ENCODE measurements at regions of chr18 and their contacts with region 1.

Region 1: DNA sequence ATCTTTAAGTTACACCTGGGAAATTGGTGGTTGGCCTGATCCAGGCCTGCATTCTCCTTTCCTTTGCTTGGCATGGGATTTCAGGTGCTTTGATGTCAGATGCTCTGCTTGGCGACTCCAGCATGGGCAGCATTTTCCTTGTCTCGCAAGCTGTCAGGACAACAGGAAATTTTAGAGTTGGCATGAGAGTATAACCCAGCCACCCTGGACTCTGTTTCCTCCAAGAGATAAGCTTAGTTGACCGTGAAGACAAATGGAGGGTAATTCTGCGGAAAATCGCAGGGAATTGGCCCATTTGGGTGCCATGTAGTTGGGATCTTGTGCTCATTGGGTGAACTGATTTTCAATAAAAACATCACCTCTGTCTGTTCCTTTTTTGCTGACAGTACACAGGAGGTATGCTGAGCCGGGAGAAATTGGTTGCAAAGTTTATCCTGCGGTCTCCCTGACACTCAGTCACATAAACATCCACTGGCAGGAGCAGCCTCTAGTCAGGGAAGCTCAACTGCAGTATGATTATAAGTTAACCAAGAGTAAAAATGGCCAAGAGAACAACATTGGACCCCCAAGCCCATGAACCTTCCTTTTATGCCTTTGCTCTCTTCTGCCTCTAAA is 409.9 kb downstream of the SETBP1 start:
- DNase-seq: no peak
- ATAC-seq: no peak
- H3K4me3 ChIP-seq: no peak overlapping the region
- H3K4me3 Mint-ChIP-seq: no peak overlapping the region
- H3K27ac ChIP-seq: no peak overlapping the region
- H3K27ac Mint-ChIP-seq: no peak overlapping the region
- H3K4me1 ChIP-seq: no peaks in the 10 kb centered on the region
- H3K4me1 Mint-ChIP-seq: no peaks in the 10 kb centered on the region
- H3K27me3 ChIP-seq: peaks cover 0 to 3% of the 10 kb centered on the region in 2 experiments
- H3K27me3 Mint-ChIP-seq: peaks cover 0 to 5% of the 10 kb centered on the region in 2 donors

Region 2: GRCh38 chr18:44927127-44927849 is 163.3 kb before region 1 on chr18:
- CTCF ChIA-PET with region 1: no interaction called
- POLR2A ChIA-PET with region 1: no interaction called
- DNase-seq: no peak
- ATAC-seq: no peak
- H3K4me3 ChIP-seq: no peak overlapping the region
- H3K4me3 Mint-ChIP-seq: no peak overlapping the region
- H3K27ac ChIP-seq: no peak overlapping the region
- H3K27ac Mint-ChIP-seq: no peak overlapping the region
- H3K4me1 ChIP-seq: no peaks in the 10 kb centered on the region
- H3K4me1 Mint-ChIP-seq: no peaks in the 10 kb centered on the region
- H3K27me3 ChIP-seq: no peaks in the 10 kb centered on the region
- H3K27me3 Mint-ChIP-seq: peaks cover 0 to 7% of the 10 kb centered on the region in 2 donors

Region 3: DNA sequence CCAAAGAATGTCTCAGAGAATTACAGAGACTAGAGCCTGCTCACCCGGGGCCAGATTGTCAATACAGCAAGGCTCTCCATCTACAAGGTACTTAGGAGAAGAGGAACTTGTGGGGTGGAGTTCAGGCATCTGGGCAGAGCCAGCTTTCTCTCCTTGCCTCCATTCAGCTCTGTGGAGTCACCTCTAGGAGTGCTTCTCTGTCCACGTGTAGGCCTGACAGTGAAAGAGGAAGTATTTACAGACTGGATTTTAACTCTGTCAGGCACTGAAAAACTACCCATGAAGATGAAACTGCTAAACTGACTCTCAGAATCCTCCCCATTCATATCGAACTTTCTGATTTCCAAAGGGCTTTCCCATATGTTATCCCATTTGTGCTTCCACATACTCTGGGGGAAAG is 94.4 kb before region 1 on chr18:
- CTCF ChIA-PET with region 1: no interaction called
- POLR2A ChIA-PET with region 1: interaction called in 1 of 2 experiments, 11 read pairs
- DNase-seq: no peak
- ATAC-seq: no peak
- H3K4me3 ChIP-seq: no peak overlapping the region
- H3K4me3 Mint-ChIP-seq: no peak overlapping the region
- H3K27ac ChIP-seq: no peak overlapping the region
- H3K27ac Mint-ChIP-seq: no peak overlapping the region
- H3K4me1 ChIP-seq: no peaks in the 10 kb centered on the region
- H3K4me1 Mint-ChIP-seq: no peaks in the 10 kb centered on the region
- H3K27me3 ChIP-seq: no peaks in the 10 kb centered on the region
- H3K27me3 Mint-ChIP-seq: no peaks in the 10 kb centered on the region

Region 4: DNA sequence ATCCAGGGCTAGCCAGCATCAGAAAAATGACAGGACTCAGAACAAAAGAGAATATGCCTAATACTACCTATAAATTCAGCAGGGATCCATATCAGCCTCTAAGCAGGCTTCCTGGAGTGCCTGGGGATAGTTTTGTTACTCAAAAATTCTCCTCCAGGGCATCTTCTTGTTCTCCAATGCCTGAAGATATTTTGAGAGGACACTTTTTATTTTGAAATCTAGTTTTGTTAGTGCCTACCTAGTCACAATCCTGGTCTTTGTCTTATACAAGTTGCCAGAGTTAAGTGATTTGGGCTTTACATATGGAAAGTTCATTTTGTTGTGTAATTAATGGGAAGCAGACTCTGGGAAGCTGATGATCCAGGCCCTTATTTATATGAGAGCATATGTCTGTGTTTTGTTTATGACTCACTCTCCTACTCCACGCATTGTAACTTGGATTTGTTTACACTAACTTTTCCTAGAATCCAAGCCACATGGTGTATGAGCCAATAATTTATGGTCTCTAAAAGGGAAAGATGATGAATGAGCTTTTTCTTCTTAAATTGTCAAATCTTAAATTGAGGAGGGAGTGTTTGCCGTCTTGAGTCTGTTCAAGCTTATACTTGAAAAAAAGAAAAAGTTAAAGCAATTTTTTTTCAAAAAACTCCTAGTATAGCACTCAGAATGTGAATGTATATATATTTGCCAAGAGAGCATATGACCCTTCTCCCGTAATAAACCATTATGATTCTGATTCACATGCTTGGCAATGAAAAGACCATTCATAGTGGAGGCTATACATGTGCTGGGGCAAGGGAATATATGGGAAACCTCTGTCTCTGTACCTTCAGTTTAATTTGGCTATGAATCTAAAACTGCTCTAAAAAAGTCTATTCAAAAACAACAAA is 39.7 kb before region 1 on chr18:
- CTCF ChIA-PET with region 1: no interaction called
- POLR2A ChIA-PET with region 1: no interaction called
- DNase-seq: no peak
- ATAC-seq: no peak
- H3K4me3 ChIP-seq: no peak overlapping the region
- H3K4me3 Mint-ChIP-seq: no peak overlapping the region
- H3K27ac ChIP-seq: no peak overlapping the region
- H3K27ac Mint-ChIP-seq: no peak overlapping the region
- H3K4me1 ChIP-seq: no peaks in the 10 kb centered on the region
- H3K4me1 Mint-ChIP-seq: no peaks in the 10 kb centered on the region
- H3K27me3 ChIP-seq: no peaks in the 10 kb centered on the region
- H3K27me3 Mint-ChIP-seq: no peaks in the 10 kb centered on the region

Measured in T-cell (primary cell).